ENCODE measurements at regions of chr2 and their contacts with region 1.

Region 1: DNA sequence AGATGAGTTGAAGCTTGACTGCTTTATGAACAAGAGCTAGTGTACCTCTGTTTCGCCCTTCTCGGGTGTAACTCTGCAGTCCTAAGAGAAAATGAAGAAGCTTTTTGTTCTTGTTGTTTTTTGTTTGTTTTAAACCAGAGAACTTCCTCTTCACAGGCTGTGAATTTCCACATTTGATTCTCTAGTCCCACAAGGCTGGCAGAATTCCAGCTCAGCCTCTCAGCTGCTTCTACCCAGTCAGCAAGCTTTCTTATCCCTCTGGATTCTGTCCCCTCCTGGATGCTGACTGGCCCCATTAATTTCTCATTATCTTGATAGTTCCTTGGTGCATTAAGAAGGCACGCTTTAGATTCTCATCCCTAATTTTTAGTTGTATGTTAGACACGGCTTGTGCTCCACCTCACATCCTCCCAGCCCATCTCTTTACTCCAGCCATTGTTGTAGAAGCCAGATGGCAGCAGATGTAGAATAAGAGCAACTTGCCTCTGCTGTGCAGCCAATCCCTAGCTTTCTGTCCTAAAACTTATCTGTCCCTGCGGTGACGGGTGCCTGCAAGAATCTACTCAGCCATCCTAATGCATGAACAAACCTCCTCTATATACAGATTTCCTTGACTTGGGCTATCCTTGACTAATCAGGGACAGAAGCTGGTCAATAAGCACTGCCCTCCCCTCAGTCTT is 12.3 kb upstream of the RESP18 start:
- DNase-seq: peak; percentile 12
- ATAC-seq: peak; percentile 35; the same call in 1 of the 2 replicates
- H3K4me3 ChIP-seq: no peak overlapping the region
- H3K27ac ChIP-seq: no peak overlapping the region
- H3K4me1 ChIP-seq: no peaks in the 10 kb centered on the region
- H3K27me3 ChIP-seq: peaks cover 27% of the 10 kb centered on the region
- CTCF ChIP-seq: no peak
- POLR2A ChIP-seq: no peak
- RAD21 ChIP-seq: no peak

Region 2: GRCh38 chr2:219177552-219178376 is 167.1 kb before region 1 on chr2 and contains the start of gene RETREG2:
- CTCF ChIA-PET with region 1: no interaction called
- POLR2A ChIA-PET with region 1: no interaction called
- dilution Hi-C with region 1: no loop called
- in situ Hi-C with region 1: no loop called
- intact Hi-C with region 1: no loop called
- DNase-seq: peak; percentile 89
- ATAC-seq: peak; percentile 73
- H3K4me3 ChIP-seq: peak within 1 kb of the TSS; percentile 64
- H3K27ac ChIP-seq: peak within 1 kb of the TSS; percentile 96
- H3K4me1 ChIP-seq: 0 out of 2 replicates have a peak, but pooled peaks cover 6% of the 10 kb centered on the region
- H3K27me3 ChIP-seq: no peaks in the 10 kb centered on the region
- CTCF ChIP-seq: peak; percentile 56
- POLR2A ChIP-seq: peak; percentile 89
- RAD21 ChIP-seq: 0 out of 2 replicates have a peak, but pooled peaks have one; percentile 4
- total RNA-seq, gene RETREG2: 39.2 and 51.1 TPM in 2 replicates

Region 3: DNA sequence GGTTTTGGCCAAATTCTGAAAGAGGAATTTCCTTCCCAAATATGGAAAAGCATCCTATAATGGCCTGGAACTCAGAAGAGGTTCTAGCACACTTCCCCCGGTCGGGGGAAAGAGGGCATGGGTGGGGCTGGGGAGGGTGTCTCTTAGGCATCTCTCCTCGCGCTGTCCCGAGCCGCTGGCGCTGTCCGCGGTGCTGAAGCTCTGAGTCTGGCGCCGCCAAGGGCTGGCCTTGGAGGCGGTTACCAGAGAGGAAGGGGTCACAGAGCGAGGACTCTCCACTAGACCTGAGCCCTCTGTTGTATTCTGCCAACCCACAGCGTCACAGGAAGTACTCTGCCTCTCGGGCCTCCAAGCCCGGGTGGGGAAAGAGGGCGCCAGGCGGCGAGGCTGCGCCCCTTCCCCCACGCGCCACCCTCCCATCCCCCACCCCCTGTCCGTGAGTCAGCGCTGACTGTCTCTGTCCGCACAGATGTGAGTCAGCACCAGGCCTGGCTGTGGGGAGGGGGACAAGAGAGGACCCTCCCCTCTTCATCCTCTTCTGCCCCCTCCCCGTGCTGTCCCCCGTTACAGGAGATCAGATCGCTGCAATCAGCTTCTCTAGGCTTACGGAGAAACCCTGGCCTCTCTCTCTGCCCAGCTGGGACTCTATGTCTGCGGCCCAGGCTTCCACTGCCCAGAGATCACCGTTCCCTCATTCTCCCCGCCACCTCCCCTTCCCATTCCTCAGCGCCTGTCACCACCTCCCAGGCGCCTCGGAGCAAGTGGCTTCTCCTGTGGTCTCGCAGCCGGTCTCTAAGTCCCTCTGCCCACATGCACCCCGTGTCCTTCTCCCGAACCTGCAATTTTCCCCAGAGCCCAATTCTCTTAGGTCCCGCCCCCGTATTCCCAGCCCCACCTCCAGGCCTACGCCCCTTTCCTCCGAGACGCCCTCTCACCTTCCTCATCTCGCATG is 36.5 kb before region 1 on chr2:
- CTCF ChIA-PET with region 1: interaction called, 3 read pairs
- POLR2A ChIA-PET with region 1: no interaction called
- dilution Hi-C with region 1: no loop called
- in situ Hi-C with region 1: no loop called
- intact Hi-C with region 1: loop called (anchors 5 kb)
- DNase-seq: peak; percentile 65
- ATAC-seq: peak; percentile 98
- H3K4me3 ChIP-seq: peak overlapping the region; percentile 59
- H3K27ac ChIP-seq: peak overlapping the region; percentile 32; the same call in 1 of the 2 replicates
- H3K4me1 ChIP-seq: peaks cover 6% of the 10 kb centered on the region; the same call in 1 of the 2 replicates
- H3K27me3 ChIP-seq: no peaks in the 10 kb centered on the region; the same call in 1 of the 2 replicates
- CTCF ChIP-seq: no peak
- POLR2A ChIP-seq: 0 out of 2 replicates have a peak, but pooled peaks have one; percentile 13
- RAD21 ChIP-seq: no peak